ENCODE measurements at regions of chr11 and their contacts with region 1.

Region 1: GRCh38 chr11:96062134-96062533 is 138.2 kb upstream of the MTMR2 start:
- DNase-seq: peak; percentile 54
- H3K4me3 Mint-ChIP-seq: peak overlapping the region; percentile 31
- H3K27ac Mint-ChIP-seq: peak overlapping the region; percentile 88
- H3K4me1 Mint-ChIP-seq: peaks cover 75% of the 10 kb centered on the region
- H3K27me3 Mint-ChIP-seq: no peaks in the 10 kb centered on the region

Region 2: GRCh38 chr11:95089620-95090542 is 972.3 kb before region 1 on chr11 and contains the start of gene ENDOD1:
- CTCF ChIA-PET with region 1: no interaction called
- POLR2A ChIA-PET with region 1: no interaction called
- intact Hi-C with region 1: loop called (anchors 10 kb)
- DNase-seq: peak; percentile 90
- H3K4me3 Mint-ChIP-seq: peak within 1 kb of the TSS; percentile 87
- H3K27ac Mint-ChIP-seq: peak within 1 kb of the TSS; percentile 92
- H3K4me1 Mint-ChIP-seq: peaks cover 68% of the 10 kb centered on the region
- H3K27me3 Mint-ChIP-seq: no peaks in the 10 kb centered on the region
- total RNA-seq, gene ENDOD1: 25.9 TPM

Region 3: GRCh38 chr11:95625164-95625900 is 436.8 kb before region 1 on chr11:
- CTCF ChIA-PET with region 1: no interaction called
- POLR2A ChIA-PET with region 1: no interaction called
- intact Hi-C with region 1: no loop called
- DNase-seq: no peak
- H3K4me3 Mint-ChIP-seq: peak overlapping the region; percentile 13
- H3K27ac Mint-ChIP-seq: peak overlapping the region; percentile 0
- H3K4me1 Mint-ChIP-seq: peaks cover 6% of the 10 kb centered on the region
- H3K27me3 Mint-ChIP-seq: no peaks in the 10 kb centered on the region

Region 4: GRCh38 chr11:96082002-96082899 is 20.1 kb after region 1 on chr11:
- CTCF ChIA-PET with region 1: no interaction called
- POLR2A ChIA-PET with region 1: no interaction called
- intact Hi-C with region 1: no loop called
- DNase-seq: no peak
- H3K4me3 Mint-ChIP-seq: no peak overlapping the region
- H3K27ac Mint-ChIP-seq: no peak overlapping the region
- H3K4me1 Mint-ChIP-seq: peaks cover 35% of the 10 kb centered on the region
- H3K27me3 Mint-ChIP-seq: no peaks in the 10 kb centered on the region

Region 5: GRCh38 chr11:96112201-96113128 is 50.3 kb after region 1 on chr11:
- CTCF ChIA-PET with region 1: no interaction called
- POLR2A ChIA-PET with region 1: no interaction called
- intact Hi-C with region 1: loop called (anchors 2 kb)
- DNase-seq: peak; percentile 57
- H3K4me3 Mint-ChIP-seq: no peak overlapping the region
- H3K27ac Mint-ChIP-seq: peak overlapping the region; percentile 5
- H3K4me1 Mint-ChIP-seq: peaks cover 45% of the 10 kb centered on the region
- H3K27me3 Mint-ChIP-seq: no peaks in the 10 kb centered on the region

Region 6: GRCh38 chr11:96188243-96189006 is 126.3 kb after region 1 on chr11:
- CTCF ChIA-PET with region 1: interaction called, 3 read pairs
- POLR2A ChIA-PET with region 1: interaction called, 7 read pairs
- intact Hi-C with region 1: loop called (anchors 2 kb)
- DNase-seq: peak; percentile 59
- H3K4me3 Mint-ChIP-seq: peak overlapping the region; percentile 7
- H3K27ac Mint-ChIP-seq: peak overlapping the region; percentile 79
- H3K4me1 Mint-ChIP-seq: peaks cover 74% of the 10 kb centered on the region
- H3K27me3 Mint-ChIP-seq: no peaks in the 10 kb centered on the region

Region 7: GRCh38 chr11:96235751-96236150 is 173.6 kb after region 1 on chr11:
- CTCF ChIA-PET with region 1: no interaction called
- POLR2A ChIA-PET with region 1: interaction called, 7 read pairs
- intact Hi-C with region 1: loop called (anchors 1 kb)
- DNase-seq: peak; percentile 90
- H3K4me3 Mint-ChIP-seq: peak overlapping the region; percentile 58
- H3K27ac Mint-ChIP-seq: peak overlapping the region; percentile 94
- H3K4me1 Mint-ChIP-seq: peaks cover 50% of the 10 kb centered on the region
- H3K27me3 Mint-ChIP-seq: no peaks in the 10 kb centered on the region

Measured in activated CD4-positive, alpha-beta memory T cell treated with anti-CD3 and anti-CD28 coated beads for 36 hours (primary cell).